ENCODE measurements at regions of chr7 and their contacts with region 1.

Region 1: GRCh38 chr7:129367700-129368388 is 66.4 kb upstream of the STRIP2 start:
- DNase-seq: peak; percentile 75
- CTCF ChIP-seq: peak; percentile 93

Region 2: DNA sequence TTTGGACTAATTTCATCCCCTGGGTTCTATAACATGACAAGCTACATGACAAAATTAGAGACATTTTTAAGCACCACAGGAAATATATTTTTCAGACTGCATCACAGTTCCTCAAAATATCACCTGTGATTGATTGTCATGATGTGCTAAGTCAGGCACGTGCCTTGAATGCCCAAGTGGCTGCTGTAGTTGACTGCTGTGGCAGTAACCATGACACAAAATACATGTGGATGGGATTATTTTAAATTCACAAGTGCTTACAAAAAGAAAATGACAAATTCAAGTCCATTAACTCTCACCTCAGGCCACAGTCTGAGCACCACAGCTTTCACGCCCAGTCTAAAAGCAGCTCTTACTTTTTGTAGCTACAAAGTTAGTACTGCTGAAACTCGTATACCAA is 358.4 kb before region 1 on chr7:
- CTCF ChIA-PET with region 1: no interaction called
- POLR2A ChIA-PET with region 1: no interaction called
- DNase-seq: peak; percentile 38
- CTCF ChIP-seq: no peak

Region 3: DNA sequence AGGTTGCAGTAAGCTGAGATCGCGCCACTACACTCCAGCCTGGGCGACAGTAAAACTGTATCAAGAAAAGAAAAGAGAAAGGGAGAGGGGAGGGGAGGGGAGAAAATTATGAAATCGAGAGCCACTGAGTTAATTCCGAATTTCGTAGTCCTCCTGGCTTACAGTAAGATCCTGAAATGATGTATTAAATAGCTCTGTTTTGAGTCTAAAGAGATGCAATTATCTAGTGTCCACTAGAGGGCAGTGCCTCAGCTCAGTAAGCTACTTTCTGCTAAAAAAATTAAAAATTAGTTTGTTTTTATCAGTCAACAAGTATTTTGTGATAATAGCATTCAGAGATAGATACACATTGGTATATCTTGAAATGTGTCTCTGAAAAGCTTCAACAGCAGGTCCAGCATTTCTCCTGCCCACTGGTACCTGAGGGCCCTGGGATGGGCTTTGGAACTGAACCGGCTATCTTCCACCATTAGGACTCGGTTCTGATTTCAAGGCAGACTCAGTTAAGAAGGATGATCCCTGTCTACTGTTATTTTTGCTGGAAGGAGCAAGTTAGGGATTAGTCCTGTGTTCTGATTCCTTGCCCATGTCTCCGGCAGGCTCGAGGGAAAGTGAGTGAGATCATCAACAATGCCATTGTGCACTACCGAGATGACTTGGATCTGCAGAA is 203.8 kb before region 1 on chr7:
- CTCF ChIA-PET with region 1: no interaction called
- POLR2A ChIA-PET with region 1: no interaction called
- DNase-seq: no peak
- CTCF ChIP-seq: peak; percentile 68

Region 4: GRCh38 chr7:129351320-129351719 is 16.5 kb before region 1 on chr7:
- CTCF ChIA-PET with region 1: interaction called, 255 read pairs
- POLR2A ChIA-PET with region 1: no interaction called
- DNase-seq: peak; percentile 17
- CTCF ChIP-seq: no peak

Region 5: DNA sequence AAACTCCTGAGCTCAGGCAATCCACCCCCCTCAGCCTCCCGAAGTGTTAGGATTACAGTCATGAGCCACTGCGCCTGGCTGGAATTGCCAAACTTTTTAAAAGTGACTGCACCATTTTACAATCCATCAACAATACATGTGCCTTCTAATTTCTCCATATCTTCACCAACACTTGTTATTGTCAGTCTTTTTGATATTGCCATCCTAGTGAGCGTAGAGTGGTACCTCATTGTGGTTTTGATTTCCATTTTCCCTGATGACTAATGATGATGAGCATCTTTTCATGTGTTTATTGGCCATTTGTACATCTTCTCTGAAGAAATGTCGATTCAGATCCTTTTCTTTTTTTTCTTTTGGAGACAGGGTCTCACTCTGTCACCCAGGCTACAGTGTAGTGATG is 44.7 kb after region 1 on chr7:
- CTCF ChIA-PET with region 1: interaction called, 14 read pairs
- POLR2A ChIA-PET with region 1: no interaction called
- DNase-seq: no peak
- CTCF ChIP-seq: no peak

Region 6: DNA sequence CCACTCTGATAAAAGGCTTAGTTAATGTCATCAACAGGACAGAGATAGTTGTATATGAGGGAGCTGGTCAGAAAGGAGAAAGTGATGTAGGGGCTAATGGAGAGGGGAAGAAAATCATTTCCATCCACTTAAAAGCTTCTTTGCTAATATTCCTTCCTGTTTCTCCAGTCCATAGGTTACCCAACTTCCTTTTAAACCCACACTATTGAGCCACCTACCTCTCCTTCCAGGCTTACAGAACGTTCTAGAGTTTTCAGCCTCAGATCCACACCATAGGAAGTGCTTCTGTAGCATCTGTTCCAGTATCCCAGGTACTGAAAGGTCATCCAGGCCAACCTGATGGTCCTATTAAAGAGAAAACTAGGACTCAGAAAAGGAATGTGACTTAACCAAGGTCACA is 94.6 kb after region 1 on chr7:
- CTCF ChIA-PET with region 1: interaction called, 120 read pairs
- POLR2A ChIA-PET with region 1: no interaction called
- DNase-seq: no peak
- CTCF ChIP-seq: no peak

Region 7: GRCh38 chr7:129644634-129645230 is 276.9 kb after region 1 on chr7:
- CTCF ChIA-PET with region 1: interaction called, 22 read pairs
- POLR2A ChIA-PET with region 1: no interaction called
- DNase-seq: no peak
- CTCF ChIP-seq: peak; percentile 23